ENCODE measurements at regions of chr6 and their contacts with region 1.

Region 1: GRCh38 chr6:99151634-99152344 is 197.7 kb downstream of the FAXC start:
- DNase-seq: no peak
- H3K4me3 Mint-ChIP-seq: no peak overlapping the region
- H3K27ac Mint-ChIP-seq: no peak overlapping the region
- H3K4me1 Mint-ChIP-seq: no peaks in the 10 kb centered on the region
- H3K27me3 Mint-ChIP-seq: peaks cover 6% of the 10 kb centered on the region

Region 2: DNA sequence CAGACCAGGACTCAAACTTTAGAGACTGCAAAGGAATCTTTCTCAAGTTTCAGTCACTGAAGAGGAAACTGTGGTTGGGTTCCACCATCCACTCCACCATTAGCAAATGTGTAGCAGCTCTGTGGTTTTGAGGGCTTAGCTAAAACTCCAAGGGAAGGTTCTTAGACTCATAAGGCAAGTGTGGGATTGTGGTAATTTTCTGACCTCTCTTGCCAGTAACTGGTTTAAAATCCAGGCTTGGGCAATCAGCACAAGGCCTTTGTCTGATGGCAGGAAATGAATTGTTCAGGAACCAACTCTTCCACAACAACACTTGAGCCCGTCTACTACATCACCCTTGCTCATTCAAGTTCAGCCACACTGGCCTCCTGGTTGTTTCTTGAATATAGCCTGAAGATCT is 135.4 kb before region 1 on chr6:
- intact Hi-C with region 1: no loop called
- DNase-seq: no peak
- H3K4me3 Mint-ChIP-seq: no peak overlapping the region
- H3K27ac Mint-ChIP-seq: no peak overlapping the region
- H3K4me1 Mint-ChIP-seq: peaks cover 18% of the 10 kb centered on the region
- H3K27me3 Mint-ChIP-seq: peaks cover 2% of the 10 kb centered on the region

Region 3: GRCh38 chr6:99241905-99242534 is 90.2 kb after region 1 on chr6:
- intact Hi-C with region 1: loop called (anchors 2 kb)
- DNase-seq: no peak
- H3K4me3 Mint-ChIP-seq: no peak overlapping the region
- H3K27ac Mint-ChIP-seq: no peak overlapping the region
- H3K4me1 Mint-ChIP-seq: no peaks in the 10 kb centered on the region
- H3K27me3 Mint-ChIP-seq: peaks cover 6% of the 10 kb centered on the region

Measured in activated T-helper 1 cell treated with anti-CD3 and anti-CD28 coated beads, Interleukin-12 subunit alpha, Interleukin-12 subunit beta, Interleukin-2, Interleukin-4 antibody, amounts not matched to agents 30 ng/mL and 10 ng/mL and 1 ng/mL, durations not matched to agents 14 hours and 24 hours and 36 hours (primary cell).